T-cell (primary cell): ENCODE measurements at regions of chr1 and their contacts with region 1.

Region 1: DNA sequence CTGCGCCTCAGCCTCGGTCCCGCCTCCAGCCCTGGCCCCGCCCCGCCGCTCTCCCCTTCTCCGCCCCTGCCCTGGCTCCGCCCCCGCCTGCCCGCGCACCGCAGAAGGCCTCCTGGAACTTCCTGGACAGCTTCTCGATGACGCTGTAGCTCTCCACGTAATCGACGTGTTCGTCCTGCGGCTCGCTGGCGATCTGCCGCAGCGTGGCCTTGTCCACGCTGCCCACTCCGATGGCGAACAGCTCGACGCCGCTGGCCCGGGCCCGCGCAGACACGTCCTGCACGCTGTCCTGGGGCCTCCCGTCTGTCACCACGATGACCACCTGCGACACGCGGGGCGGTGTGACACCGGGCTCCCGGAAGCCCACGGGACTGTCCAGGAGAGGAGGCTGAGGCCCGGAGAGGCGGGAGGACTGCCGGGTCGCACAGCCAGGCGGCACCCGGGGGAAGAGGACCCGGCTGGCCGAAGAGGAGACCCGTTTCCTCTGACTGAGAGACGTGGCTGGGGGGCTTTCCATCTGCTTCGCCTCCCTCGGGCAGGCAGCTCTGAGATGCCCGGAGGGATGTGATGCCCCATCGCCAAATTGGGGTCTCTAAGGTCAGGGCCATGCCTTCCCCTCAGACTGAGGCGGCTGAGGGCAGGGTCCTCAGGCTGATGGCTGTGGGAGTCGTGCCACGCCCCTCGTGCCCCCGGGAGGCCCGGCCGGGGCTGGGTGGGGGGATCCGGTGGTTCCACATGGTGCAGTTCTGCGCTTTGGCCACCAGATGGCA is 4.6 kb downstream of the MATN1 start:
- DNase-seq: peak; percentile 60 to 96 (median 78)
- ATAC-seq: peak; percentile 72 to 78 (median 77)
- H3K4me3 ChIP-seq: peak overlapping the region; percentile 78 to 98
- H3K4me3 Mint-ChIP-seq: peak overlapping the region; percentile 74 to 84 (median 83)
- H3K27ac ChIP-seq: peak overlapping the region; percentile 100
- H3K27ac Mint-ChIP-seq: peak overlapping the region; percentile 89 to 92
- H3K4me1 ChIP-seq: peaks cover 0 to 47% of the 10 kb centered on the region in 2 experiments
- H3K4me1 Mint-ChIP-seq: peaks cover 20 to 44% (median 40%) of the 10 kb centered on the region in 3 donors
- H3K27me3 ChIP-seq: peaks cover 0 to 4% of the 10 kb centered on the region in 2 experiments
- H3K27me3 Mint-ChIP-seq: no peaks in the 10 kb centered on the region

Region 2: DNA sequence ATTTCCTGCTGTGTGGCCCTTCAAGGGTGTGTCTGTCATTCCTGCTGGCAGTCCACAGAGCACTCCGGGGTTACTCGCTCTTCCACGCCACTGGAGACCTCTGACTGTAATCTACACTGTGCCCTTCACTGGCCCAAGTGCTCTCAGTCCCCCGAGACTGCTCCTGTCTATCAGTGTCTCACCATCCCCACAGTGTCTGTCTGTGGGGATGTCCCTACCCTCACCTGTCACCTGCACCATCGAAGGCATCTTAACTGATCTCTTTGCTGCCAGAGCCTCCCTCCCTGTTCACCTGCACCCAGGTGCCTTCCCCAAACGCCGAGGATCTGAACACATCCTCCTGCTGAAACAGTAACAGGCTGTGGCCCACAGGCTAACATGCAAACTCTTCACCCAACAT is 132.2 kb before region 1 on chr1:
- CTCF ChIA-PET with region 1: no interaction called
- POLR2A ChIA-PET with region 1: no interaction called
- DNase-seq: no peak
- ATAC-seq: no peak
- H3K4me3 ChIP-seq: no peak overlapping the region
- H3K4me3 Mint-ChIP-seq: no peak overlapping the region
- H3K27ac ChIP-seq: no peak overlapping the region
- H3K27ac Mint-ChIP-seq: no peak overlapping the region
- H3K4me1 ChIP-seq: no peaks in the 10 kb centered on the region
- H3K4me1 Mint-ChIP-seq: no peaks in the 10 kb centered on the region
- H3K27me3 ChIP-seq: peaks cover 0 to 31% of the 10 kb centered on the region in 2 experiments
- H3K27me3 Mint-ChIP-seq: peaks cover 64 to 67% of the 10 kb centered on the region in 2 donors

Region 3: GRCh38 chr1:30743584-30744059 is 24.8 kb after region 1 on chr1:
- CTCF ChIA-PET with region 1: interaction called, 4 to 60 read pairs
- POLR2A ChIA-PET with region 1: interaction called, 3 to 18 read pairs
- DNase-seq: peak; percentile 32 to 90 (median 74)
- ATAC-seq: peak; percentile 79 to 86 (median 82)
- H3K4me3 ChIP-seq: peak overlapping the region; percentile 32 to 58
- H3K4me3 Mint-ChIP-seq: peak overlapping the region; percentile 50 to 98 (median 80)
- H3K27ac ChIP-seq: peak overlapping the region; percentile 79
- H3K27ac Mint-ChIP-seq: peak overlapping the region; percentile 96 to 98
- H3K4me1 ChIP-seq: peaks cover 75 to 100% of the 10 kb centered on the region in 2 experiments
- H3K4me1 Mint-ChIP-seq: peaks cover 96 to 99% (median 99%) of the 10 kb centered on the region in 3 donors
- H3K27me3 ChIP-seq: no peaks in the 10 kb centered on the region
- H3K27me3 Mint-ChIP-seq: no peaks in the 10 kb centered on the region

Region 4: DNA sequence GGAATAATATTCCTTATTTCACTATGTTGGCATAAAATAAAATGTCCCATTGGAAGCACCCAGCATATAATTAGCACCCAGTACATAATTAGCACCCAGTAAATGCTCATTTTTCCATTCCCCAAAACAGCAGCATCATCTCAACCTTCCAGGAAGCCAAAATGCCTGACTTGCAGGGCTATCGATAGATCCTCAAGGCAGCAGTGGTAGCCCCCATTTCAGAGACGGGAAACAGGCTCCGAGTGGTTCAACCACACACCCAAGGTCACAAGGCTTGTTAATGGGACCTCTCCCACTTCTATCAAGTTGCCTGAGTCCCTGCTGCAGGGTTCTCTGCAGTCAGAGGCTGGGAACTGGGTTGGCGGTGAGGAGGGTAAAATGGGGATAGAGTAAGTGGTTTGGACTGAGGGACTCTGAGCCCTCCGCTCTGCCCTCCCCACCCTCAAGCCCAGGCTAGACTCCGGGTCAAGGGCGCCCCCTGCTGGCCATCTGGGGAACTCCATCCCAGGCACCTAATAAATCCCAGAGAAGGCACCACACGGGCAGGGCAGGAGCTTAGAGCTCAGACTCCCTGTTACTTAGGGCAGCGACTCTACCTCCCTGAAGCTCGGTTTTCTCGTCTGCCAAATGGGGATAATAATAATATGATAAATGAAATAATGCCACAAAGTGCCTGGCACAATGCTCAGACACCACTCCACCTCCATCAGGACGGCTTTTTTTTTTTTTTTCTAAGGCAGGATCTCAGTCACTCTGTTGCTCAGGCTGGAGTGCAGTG is 60.7 kb after region 1 on chr1:
- CTCF ChIA-PET with region 1: interaction called, 55 to 114 read pairs
- POLR2A ChIA-PET with region 1: interaction called, 3 to 5 read pairs
- DNase-seq: peak; percentile 66 to 95 (median 86)
- ATAC-seq: peak; percentile 75 to 92 (median 80)
- H3K4me3 ChIP-seq: no peak overlapping the region
- H3K4me3 Mint-ChIP-seq: peak overlapping the region in 1 of 3 donors; percentile 17
- H3K27ac ChIP-seq: no peak overlapping the region
- H3K27ac Mint-ChIP-seq: peak overlapping the region in 1 of 2 donors; percentile 58
- H3K4me1 ChIP-seq: peaks cover 4 to 19% of the 10 kb centered on the region in 2 experiments
- H3K4me1 Mint-ChIP-seq: peaks cover 13 to 21% (median 21%) of the 10 kb centered on the region in 3 donors
- H3K27me3 ChIP-seq: peaks cover 0 to 17% of the 10 kb centered on the region in 2 experiments
- H3K27me3 Mint-ChIP-seq: peaks cover 0 to 1% of the 10 kb centered on the region in 2 donors

Region 5: GRCh38 chr1:30790850-30791778 is 72.3 kb after region 1 on chr1:
- CTCF ChIA-PET with region 1: interaction called in 1 of 2 experiments, 3 read pairs
- POLR2A ChIA-PET with region 1: interaction called in 1 of 2 experiments, 10 read pairs
- DNase-seq: peak in 16 of 35 experiments; percentile 11 to 59 (median 18)
- ATAC-seq: peak; percentile 52 to 89 (median 66)
- H3K4me3 ChIP-seq: no peak overlapping the region
- H3K4me3 Mint-ChIP-seq: no peak overlapping the region
- H3K27ac ChIP-seq: no peak overlapping the region
- H3K27ac Mint-ChIP-seq: no peak overlapping the region
- H3K4me1 ChIP-seq: peaks cover 4 to 10% of the 10 kb centered on the region in 2 experiments
- H3K4me1 Mint-ChIP-seq: peaks cover 6 to 18% (median 12%) of the 10 kb centered on the region in 3 donors
- H3K27me3 ChIP-seq: peaks cover 0 to 52% of the 10 kb centered on the region in 2 experiments
- H3K27me3 Mint-ChIP-seq: peaks cover 7 to 20% of the 10 kb centered on the region in 2 donors

Region 6: GRCh38 chr1:30801771-30802198 is 83.0 kb after region 1 on chr1:
- CTCF ChIA-PET with region 1: interaction called in 1 of 2 experiments, 13 read pairs
- POLR2A ChIA-PET with region 1: no interaction called
- DNase-seq: peak; percentile 31 to 84 (median 71)
- ATAC-seq: peak; percentile 68 to 81 (median 72)
- H3K4me3 ChIP-seq: no peak overlapping the region
- H3K4me3 Mint-ChIP-seq: no peak overlapping the region
- H3K27ac ChIP-seq: no peak overlapping the region
- H3K27ac Mint-ChIP-seq: peak overlapping the region in 1 of 2 donors; percentile 36
- H3K4me1 ChIP-seq: peaks cover 0 to 8% of the 10 kb centered on the region in 2 experiments
- H3K4me1 Mint-ChIP-seq: peaks cover 4 to 6% (median 4%) of the 10 kb centered on the region in 3 donors
- H3K27me3 ChIP-seq: peaks cover 5 to 50% of the 10 kb centered on the region in 2 experiments
- H3K27me3 Mint-ChIP-seq: peaks cover 25 to 31% of the 10 kb centered on the region in 2 donors

Region 7: GRCh38 chr1:31196685-31197084 is 477.9 kb after region 1 on chr1:
- CTCF ChIA-PET with region 1: no interaction called
- POLR2A ChIA-PET with region 1: no interaction called
- DNase-seq: no peak
- ATAC-seq: no peak
- H3K4me3 ChIP-seq: no peak overlapping the region
- H3K4me3 Mint-ChIP-seq: no peak overlapping the region
- H3K27ac ChIP-seq: no peak overlapping the region
- H3K27ac Mint-ChIP-seq: no peak overlapping the region
- H3K4me1 ChIP-seq: no peaks in the 10 kb centered on the region
- H3K4me1 Mint-ChIP-seq: no peaks in the 10 kb centered on the region
- H3K27me3 ChIP-seq: peaks cover 0 to 12% of the 10 kb centered on the region in 2 experiments
- H3K27me3 Mint-ChIP-seq: peaks cover 0 to 3% of the 10 kb centered on the region in 2 donors

Region 8: GRCh38 chr1:32650752-32651460 is 1932.1 kb after region 1 on chr1 and contains the start of gene RBBP4:
- CTCF ChIA-PET with region 1: no interaction called
- POLR2A ChIA-PET with region 1: interaction called in 1 of 2 experiments, 12 read pairs
- DNase-seq: peak; percentile 93 to 99 (median 97)
- ATAC-seq: peak; percentile 85 to 91 (median 87)
- H3K4me3 ChIP-seq: peak within 1 kb of the TSS; percentile 72 to 85
- H3K4me3 Mint-ChIP-seq: peak within 1 kb of the TSS; percentile 90 to 92 (median 91)
- H3K27ac ChIP-seq: peak within 1 kb of the TSS; percentile 98
- H3K27ac Mint-ChIP-seq: peak within 1 kb of the TSS; percentile 99
- H3K4me1 ChIP-seq: peaks cover 29 to 48% of the 10 kb centered on the region in 2 experiments
- H3K4me1 Mint-ChIP-seq: peaks cover 57 to 68% (median 57%) of the 10 kb centered on the region in 3 donors
- H3K27me3 ChIP-seq: no peaks in the 10 kb centered on the region
- H3K27me3 Mint-ChIP-seq: no peaks in the 10 kb centered on the region
- total RNA-seq, gene RBBP4: 150 to 162 (median 158) TPM